Caco-2 (cell line): ENCODE measurements at regions of chr11 and their contacts with region 1.

Region 1: GRCh38 chr11:96342961-96343711 is at the start of gene MAML2:
- DNase-seq: peak; percentile 96 to 97
- H3K4me3 ChIP-seq: peak within 1 kb of the TSS; percentile 66
- H3K4me3 Mint-ChIP-seq: peak within 1 kb of the TSS; percentile 93
- H3K27ac Mint-ChIP-seq: peak within 1 kb of the TSS; percentile 68
- H3K4me1 ChIP-seq: peaks cover 19% of the 10 kb centered on the region
- H3K4me1 Mint-ChIP-seq: peaks cover 24% of the 10 kb centered on the region
- H3K27me3 ChIP-seq: no peaks in the 10 kb centered on the region
- H3K27me3 Mint-ChIP-seq: no peaks in the 10 kb centered on the region
- CTCF ChIP-seq: peak; percentile 99
- total RNA-seq, gene MAML2: 11.5 and 12.2 TPM in 2 replicates

Region 2: DNA sequence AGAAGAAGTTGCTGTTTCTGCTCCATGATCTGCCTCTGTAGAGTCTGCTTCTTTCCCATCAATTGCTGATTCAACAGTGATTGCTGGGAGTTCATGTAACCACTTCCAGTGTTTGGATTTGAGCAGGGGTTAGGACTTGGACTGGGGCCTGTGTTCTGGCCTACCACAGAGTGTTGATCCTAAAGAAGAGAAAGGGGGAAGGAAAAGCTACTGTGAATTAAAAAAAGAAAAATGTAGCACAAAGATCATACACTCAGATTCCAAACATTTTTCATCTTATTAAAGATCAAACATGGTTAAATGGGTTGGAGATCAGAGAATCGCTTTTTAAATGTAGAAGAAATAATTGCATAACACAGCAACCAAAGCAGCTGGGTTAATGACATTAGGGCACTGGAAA is 351.6 kb before region 1 on chr11:
- CTCF ChIA-PET with region 1: no interaction called
- POLR2A ChIA-PET with region 1: no interaction called
- intact Hi-C with region 1: loop called (anchors 5 kb)
- DNase-seq: no peak
- H3K4me3 ChIP-seq: no peak overlapping the region
- H3K4me3 Mint-ChIP-seq: no peak overlapping the region
- H3K27ac Mint-ChIP-seq: peak overlapping the region; percentile 50
- H3K4me1 ChIP-seq: peaks cover 14% of the 10 kb centered on the region
- H3K4me1 Mint-ChIP-seq: peaks cover 22% of the 10 kb centered on the region
- H3K27me3 ChIP-seq: no peaks in the 10 kb centered on the region
- H3K27me3 Mint-ChIP-seq: no peaks in the 10 kb centered on the region
- CTCF ChIP-seq: no peak

Region 3: GRCh38 chr11:96098514-96099241 is 244.5 kb before region 1 on chr11:
- CTCF ChIA-PET with region 1: interaction called, 6 read pairs
- POLR2A ChIA-PET with region 1: interaction called, 5 read pairs
- intact Hi-C with region 1: loop called (anchors 1 kb)
- DNase-seq: peak; percentile 90 to 91
- H3K4me3 ChIP-seq: no peak overlapping the region
- H3K4me3 Mint-ChIP-seq: peak overlapping the region; percentile 65
- H3K27ac Mint-ChIP-seq: peak overlapping the region; percentile 94
- H3K4me1 ChIP-seq: peaks cover 75% of the 10 kb centered on the region
- H3K4me1 Mint-ChIP-seq: peaks cover 71% of the 10 kb centered on the region
- H3K27me3 ChIP-seq: no peaks in the 10 kb centered on the region
- H3K27me3 Mint-ChIP-seq: no peaks in the 10 kb centered on the region
- CTCF ChIP-seq: no peak

Region 4: GRCh38 chr11:96219981-96220623 is 123.0 kb before region 1 on chr11:
- CTCF ChIA-PET with region 1: interaction called, 15 read pairs
- POLR2A ChIA-PET with region 1: no interaction called
- intact Hi-C with region 1: no loop called
- DNase-seq: peak; percentile 65 to 67
- H3K4me3 ChIP-seq: no peak overlapping the region
- H3K4me3 Mint-ChIP-seq: peak overlapping the region; percentile 45
- H3K27ac Mint-ChIP-seq: peak overlapping the region; percentile 81
- H3K4me1 ChIP-seq: peaks cover 47% of the 10 kb centered on the region
- H3K4me1 Mint-ChIP-seq: peaks cover 46% of the 10 kb centered on the region
- H3K27me3 ChIP-seq: no peaks in the 10 kb centered on the region
- H3K27me3 Mint-ChIP-seq: no peaks in the 10 kb centered on the region
- CTCF ChIP-seq: no peak

Region 5: DNA sequence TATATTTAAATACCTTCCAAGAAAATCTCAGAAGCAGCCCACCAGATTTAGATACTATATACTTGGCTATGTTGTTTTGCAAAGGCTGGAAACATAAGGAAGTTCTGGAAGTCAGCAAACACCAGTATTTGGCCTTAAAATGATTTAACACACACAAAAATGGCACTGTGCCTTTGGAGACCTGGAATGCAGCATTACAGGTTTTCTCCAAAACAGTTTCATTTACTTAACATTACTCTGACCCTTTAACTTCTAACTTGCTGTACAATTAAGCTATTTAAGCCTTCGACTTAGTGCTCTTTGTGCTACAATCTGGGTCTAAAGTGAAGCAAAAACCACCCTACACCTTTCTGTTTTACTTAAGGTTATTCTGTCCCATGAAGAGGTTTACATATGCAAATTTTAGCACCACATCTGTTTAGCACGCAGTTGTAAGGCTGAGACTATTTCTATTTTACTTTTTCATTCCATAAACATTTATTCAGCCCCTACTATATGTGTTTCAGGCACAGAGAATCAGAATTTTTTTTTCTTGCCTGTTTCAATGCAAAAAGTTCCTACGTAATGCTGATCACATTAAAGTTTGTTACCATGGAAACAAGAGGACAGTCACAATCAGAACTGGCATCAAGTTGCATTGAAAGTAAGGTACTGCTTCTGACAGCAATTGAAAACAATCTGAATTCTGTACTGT is 70.5 kb before region 1 on chr11:
- CTCF ChIA-PET with region 1: interaction called, 11 read pairs
- POLR2A ChIA-PET with region 1: no interaction called
- intact Hi-C with region 1: loop called (anchors 1 kb)
- DNase-seq: peak in 1 of 2 experiments; percentile 77
- H3K4me3 ChIP-seq: peak overlapping the region; percentile 4; the same call in 1 of the 2 replicates
- H3K4me3 Mint-ChIP-seq: peak overlapping the region; percentile 70
- H3K27ac Mint-ChIP-seq: peak overlapping the region; percentile 96
- H3K4me1 ChIP-seq: peaks cover 46% of the 10 kb centered on the region
- H3K4me1 Mint-ChIP-seq: peaks cover 37% of the 10 kb centered on the region
- H3K27me3 ChIP-seq: no peaks in the 10 kb centered on the region
- H3K27me3 Mint-ChIP-seq: no peaks in the 10 kb centered on the region
- CTCF ChIP-seq: no peak

Region 6: DNA sequence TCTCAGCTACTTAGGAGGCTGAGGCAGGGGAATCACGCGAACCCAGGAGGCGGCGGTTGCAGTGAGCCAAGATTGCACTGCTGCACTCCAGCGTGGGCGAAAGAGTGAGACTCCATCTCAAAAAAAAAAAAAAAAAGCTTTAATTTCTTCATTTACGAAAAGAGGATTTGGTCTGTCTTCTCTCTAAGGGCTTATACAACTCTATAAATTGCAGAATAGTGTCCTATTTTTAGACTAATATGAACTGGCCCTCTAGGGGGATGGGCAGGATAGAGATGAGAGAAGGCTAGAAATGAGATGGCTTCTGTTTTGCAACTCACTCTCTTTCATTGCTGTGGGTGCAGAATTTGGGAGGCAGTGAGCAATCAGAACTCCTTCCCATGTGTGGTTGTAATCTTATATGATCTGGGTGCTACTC is 11.4 kb before region 1 on chr11:
- CTCF ChIA-PET with region 1: interaction called, 41 read pairs
- POLR2A ChIA-PET with region 1: no interaction called
- intact Hi-C with region 1: no loop called
- DNase-seq: no peak
- H3K4me3 ChIP-seq: no peak overlapping the region
- H3K4me3 Mint-ChIP-seq: no peak overlapping the region
- H3K27ac Mint-ChIP-seq: peak overlapping the region; percentile 42
- H3K4me1 ChIP-seq: peaks cover 48% of the 10 kb centered on the region
- H3K4me1 Mint-ChIP-seq: peaks cover 42% of the 10 kb centered on the region
- H3K27me3 ChIP-seq: no peaks in the 10 kb centered on the region
- H3K27me3 Mint-ChIP-seq: no peaks in the 10 kb centered on the region
- CTCF ChIP-seq: no peak